Posterior vena cava (tissue), 2 donors: ENCODE measurements at regions of chr20 and their contacts with region 1.

Region 1: GRCh38 chr20:47400685-47401084 is 44.2 kb upstream of the ZMYND8 start:
- DNase-seq: no peak

Region 2: GRCh38 chr20:46545077-46545826 is 855.4 kb before region 1 on chr20:
- intact Hi-C with region 1: no loop called
- DNase-seq: no peak

Region 3: GRCh38 chr20:47334022-47334551 is 66.6 kb before region 1 on chr20:
- intact Hi-C with region 1: no loop called
- DNase-seq: peak; percentile 81

Region 4: GRCh38 chr20:47440857-47441773 is 40.4 kb after region 1 on chr20:
- intact Hi-C with region 1: loop called in 1 of 2 experiments (anchors 1 kb)
- DNase-seq: peak; percentile 9

Region 5: DNA sequence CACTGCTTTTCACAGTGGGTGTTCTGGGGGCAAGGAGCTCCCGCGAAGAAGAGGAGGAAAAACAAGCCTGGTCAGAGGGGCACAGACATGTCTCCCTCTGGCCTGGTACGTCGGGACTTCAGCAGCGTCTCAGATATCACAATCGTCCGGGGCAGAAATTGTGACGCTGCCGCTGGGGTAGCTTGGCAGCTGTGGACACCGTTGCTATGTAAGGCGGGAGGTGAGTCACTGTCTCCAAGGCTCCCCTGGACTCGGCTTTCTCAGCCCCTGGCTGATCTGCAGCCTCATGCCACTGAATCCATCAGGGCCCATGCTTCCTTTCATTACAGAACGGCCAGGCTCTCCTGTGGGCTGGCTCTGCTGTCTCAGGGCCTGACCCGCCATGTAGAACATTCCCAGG is 285.9 kb after region 1 on chr20:
- intact Hi-C with region 1: no loop called
- DNase-seq: no peak